ENCODE measurements at regions of chr16 and their contacts with region 1.

Region 1: GRCh38 chr16:2486645-2487516 is 12.0 kb downstream of the TBC1D24 start:
- DNase-seq: peak; percentile 61 to 93 (median 79)
- ATAC-seq: peak; percentile 97
- H3K4me3 ChIP-seq: peak overlapping the region in 1 of 2 experiments; percentile 5
- H3K4me3 Mint-ChIP-seq: peak overlapping the region; percentile 66
- H3K27ac ChIP-seq: peak overlapping the region in 1 of 2 experiments; percentile 40
- H3K27ac Mint-ChIP-seq: peak overlapping the region; percentile 90
- H3K4me1 ChIP-seq: peaks cover 18% of the 10 kb centered on the region
- H3K4me1 Mint-ChIP-seq: peaks cover 12% of the 10 kb centered on the region
- H3K27me3 ChIP-seq: no peaks in the 10 kb centered on the region
- H3K27me3 Mint-ChIP-seq: no peaks in the 10 kb centered on the region
- CTCF ChIP-seq: peak; percentile 77

Region 2: DNA sequence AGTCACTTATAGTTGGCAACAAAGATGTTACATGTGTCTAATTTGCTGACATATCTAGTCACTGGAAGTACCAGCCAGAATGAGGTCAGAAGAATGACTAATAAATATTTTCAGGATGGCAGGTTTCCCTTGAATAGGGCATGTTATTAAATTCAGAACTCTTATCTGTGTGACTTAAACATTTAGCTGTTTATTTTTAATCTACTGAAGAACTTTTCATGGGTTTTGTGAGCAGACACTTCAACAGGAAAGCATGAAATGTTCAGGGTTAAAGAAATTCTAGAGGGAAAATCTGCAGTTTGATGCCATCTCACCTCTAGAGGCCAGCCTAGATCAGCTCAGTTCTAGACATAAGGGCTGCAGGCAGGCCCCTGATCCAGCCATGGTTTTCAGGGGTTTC is 795.6 kb before region 1 on chr16:
- CTCF ChIA-PET with region 1: no interaction called
- POLR2A ChIA-PET with region 1: no interaction called
- intact Hi-C with region 1: no loop called
- DNase-seq: no peak
- ATAC-seq: no peak
- H3K4me3 ChIP-seq: no peak overlapping the region
- H3K4me3 Mint-ChIP-seq: no peak overlapping the region
- H3K27ac ChIP-seq: no peak overlapping the region
- H3K27ac Mint-ChIP-seq: no peak overlapping the region
- H3K4me1 ChIP-seq: no peaks in the 10 kb centered on the region
- H3K4me1 Mint-ChIP-seq: peaks cover 1% of the 10 kb centered on the region
- H3K27me3 ChIP-seq: no peaks in the 10 kb centered on the region
- H3K27me3 Mint-ChIP-seq: no peaks in the 10 kb centered on the region
- CTCF ChIP-seq: no peak

Region 3: GRCh38 chr16:2194852-2195321 is 292.0 kb before region 1 on chr16:
- CTCF ChIA-PET with region 1: interaction called, 13 read pairs
- POLR2A ChIA-PET with region 1: interaction called, 3 read pairs
- intact Hi-C with region 1: loop called in 1 of 2 experiments (anchors 1 kb)
- DNase-seq: peak in 8 of 9 experiments; percentile 23 to 79 (median 59)
- ATAC-seq: peak; percentile 70
- H3K4me3 ChIP-seq: no peak overlapping the region
- H3K4me3 Mint-ChIP-seq: peak overlapping the region; percentile 63
- H3K27ac ChIP-seq: no peak overlapping the region
- H3K27ac Mint-ChIP-seq: no peak overlapping the region
- H3K4me1 ChIP-seq: peaks cover 11% of the 10 kb centered on the region
- H3K4me1 Mint-ChIP-seq: peaks cover 5% of the 10 kb centered on the region
- H3K27me3 ChIP-seq: peaks cover 16 to 21% of the 10 kb centered on the region in 2 experiments
- H3K27me3 Mint-ChIP-seq: peaks cover 23% of the 10 kb centered on the region
- CTCF ChIP-seq: peak; percentile 25

Region 4: DNA sequence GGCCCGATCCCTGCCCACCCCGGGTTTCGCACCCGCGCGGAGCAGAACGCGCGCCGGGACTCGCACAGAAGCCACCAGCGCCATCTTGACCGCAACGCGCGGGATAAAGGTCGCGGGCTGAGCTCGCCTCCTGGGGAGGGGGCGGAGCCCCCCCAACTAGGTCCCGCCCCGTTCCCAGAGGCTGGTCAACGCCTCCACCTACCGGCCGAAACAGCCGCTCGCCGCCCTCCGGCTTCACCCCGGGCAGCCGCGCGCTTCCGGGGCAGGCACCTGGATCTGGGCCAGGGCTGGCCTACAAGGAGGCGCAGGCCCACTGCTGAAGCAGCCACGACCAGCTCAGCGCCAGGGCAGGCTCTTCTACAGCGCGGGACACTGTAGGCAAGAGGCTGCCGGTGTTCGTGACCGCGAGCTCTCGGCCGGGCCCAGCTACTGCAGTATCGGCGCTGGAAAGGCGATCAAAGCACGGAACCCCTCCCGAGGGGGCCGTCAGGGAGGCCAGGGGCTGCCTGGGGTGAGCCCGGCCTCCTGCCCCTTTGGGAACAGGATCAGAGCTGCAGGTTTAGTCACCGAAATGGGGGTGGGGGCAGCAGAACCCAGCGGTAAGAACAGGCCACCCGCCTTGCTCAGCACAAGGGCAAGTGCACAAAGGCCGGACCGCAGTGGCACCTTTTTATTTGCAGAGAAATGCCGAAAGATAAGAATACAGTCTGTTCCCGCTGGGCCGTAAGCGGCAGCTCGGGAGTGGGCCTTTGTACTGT is 235.2 kb before region 1 on chr16 and contains the start of gene ECI1:
- CTCF ChIA-PET with region 1: no interaction called
- POLR2A ChIA-PET with region 1: no interaction called
- intact Hi-C with region 1: loop called in 1 of 2 experiments (anchors 2 kb)
- DNase-seq: peak; percentile 50 to 89 (median 80)
- ATAC-seq: peak; percentile 70
- H3K4me3 ChIP-seq: peak within 1 kb of the TSS; percentile 57 to 64
- H3K4me3 Mint-ChIP-seq: peak within 1 kb of the TSS; percentile 85
- H3K27ac ChIP-seq: peak within 1 kb of the TSS; percentile 64 to 81
- H3K27ac Mint-ChIP-seq: peak within 1 kb of the TSS; percentile 90
- H3K4me1 ChIP-seq: peaks cover 8% of the 10 kb centered on the region
- H3K4me1 Mint-ChIP-seq: peaks cover 10% of the 10 kb centered on the region
- H3K27me3 ChIP-seq: no peaks in the 10 kb centered on the region
- H3K27me3 Mint-ChIP-seq: no peaks in the 10 kb centered on the region
- CTCF ChIP-seq: no peak
- total RNA-seq, gene ECI1: 10.6 to 11.0 TPM

Region 5: DNA sequence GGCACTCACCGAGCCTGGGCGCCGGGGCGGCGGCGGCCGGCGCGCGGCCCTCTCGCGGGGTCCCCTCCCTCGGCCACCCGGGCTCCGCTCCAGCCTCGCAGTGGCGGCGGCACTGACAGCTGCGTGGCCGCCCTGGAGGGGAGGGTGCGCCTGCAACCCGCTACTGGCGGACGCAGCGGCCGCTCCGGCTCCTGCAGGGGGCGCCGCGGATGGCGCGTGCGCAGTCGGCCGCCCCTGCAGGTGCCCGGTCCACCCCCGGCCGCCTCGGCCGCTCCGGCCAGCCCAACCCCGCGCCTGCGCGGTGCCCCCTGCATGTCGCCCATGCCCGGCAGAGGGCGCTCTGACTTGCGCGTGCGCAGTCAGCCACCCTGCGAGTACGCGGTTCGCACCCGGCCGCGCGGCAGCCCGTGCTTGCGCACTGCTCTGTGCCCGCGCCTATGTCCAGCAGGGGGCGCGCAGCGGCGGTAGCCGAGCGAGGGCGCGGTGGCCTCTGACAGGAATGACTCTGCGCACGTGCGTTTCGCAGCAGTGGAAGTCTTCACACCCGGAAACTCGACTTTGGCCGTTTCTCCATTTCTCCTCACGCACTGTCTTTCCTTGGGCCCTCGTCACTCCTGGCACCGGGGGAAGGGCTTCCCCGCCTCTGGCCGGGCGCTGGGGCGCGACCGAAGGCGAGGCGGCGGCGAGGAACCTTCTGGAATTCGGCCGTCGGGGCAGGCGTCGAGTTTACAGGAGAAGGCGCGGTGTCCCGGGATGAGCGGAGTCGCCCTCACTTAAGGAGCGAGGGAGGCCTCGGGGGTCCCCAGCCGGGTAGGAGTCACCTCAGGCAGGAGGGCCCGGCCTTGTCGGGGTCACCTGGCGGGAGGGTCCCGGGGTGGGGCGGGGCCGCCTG is 146.1 kb before region 1 on chr16 and contains the start of gene ABCA3:
- CTCF ChIA-PET with region 1: interaction called, 5 read pairs
- POLR2A ChIA-PET with region 1: no interaction called
- intact Hi-C with region 1: loop called (anchors 1 kb)
- DNase-seq: peak; percentile 87 to 98 (median 93)
- ATAC-seq: peak; percentile 89
- H3K4me3 ChIP-seq: peak within 1 kb of the TSS; percentile 59 to 62
- H3K4me3 Mint-ChIP-seq: peak within 1 kb of the TSS; percentile 85
- H3K27ac ChIP-seq: no peak within 1 kb of the TSS
- H3K27ac Mint-ChIP-seq: peak within 1 kb of the TSS; percentile 71
- H3K4me1 ChIP-seq: peaks cover 9% of the 10 kb centered on the region
- H3K4me1 Mint-ChIP-seq: peaks cover 13% of the 10 kb centered on the region
- H3K27me3 ChIP-seq: peaks cover 0 to 3% of the 10 kb centered on the region in 2 experiments
- H3K27me3 Mint-ChIP-seq: peaks cover 5% of the 10 kb centered on the region
- CTCF ChIP-seq: peak; percentile 100
- total RNA-seq, gene ABCA3: 3.7 to 4.0 TPM

Region 6: DNA sequence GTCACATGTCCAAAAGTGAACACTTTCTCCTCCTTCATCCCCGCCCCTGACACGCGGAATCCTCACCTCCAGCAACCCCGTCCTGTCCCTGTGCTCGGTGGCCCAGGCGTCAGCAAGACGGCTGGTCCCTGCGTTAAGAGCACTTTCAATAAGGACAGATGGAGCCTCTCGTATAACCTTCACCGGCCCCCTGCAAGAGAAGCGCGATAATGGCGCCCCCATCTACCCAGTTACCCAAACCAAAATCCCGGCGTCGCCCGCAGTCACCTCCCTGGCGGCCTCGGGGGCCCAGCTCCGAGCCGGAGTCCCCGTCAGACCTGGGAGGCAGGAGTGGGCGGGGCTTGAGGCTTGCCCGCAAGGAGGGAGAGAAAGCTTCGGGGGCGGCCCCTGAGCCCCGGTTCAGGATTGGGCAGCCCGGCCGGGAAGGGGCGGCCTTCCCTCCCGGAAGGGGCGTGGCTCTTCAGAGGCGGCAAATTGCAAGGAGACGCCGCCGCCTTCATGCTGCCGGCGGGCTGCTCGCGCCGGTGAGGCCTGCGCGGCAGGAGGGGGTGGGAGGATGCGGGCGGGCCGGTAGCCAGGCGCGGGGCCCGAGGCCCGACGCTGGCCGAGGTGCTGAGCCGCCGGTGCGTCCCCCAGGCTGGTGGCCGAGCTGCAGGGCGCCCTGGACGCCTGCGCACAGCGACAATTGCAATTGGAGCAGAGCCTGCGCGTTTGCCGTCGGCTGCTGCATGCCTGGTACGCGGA is 27.1 kb before region 1 on chr16 and contains the start of gene TEDC2:
- CTCF ChIA-PET with region 1: interaction called, 4 read pairs
- POLR2A ChIA-PET with region 1: no interaction called
- intact Hi-C with region 1: loop called (anchors 1 kb)
- DNase-seq: peak; percentile 92 to 98 (median 98)
- ATAC-seq: peak; percentile 100
- H3K4me3 ChIP-seq: peak within 1 kb of the TSS; percentile 54 to 62
- H3K4me3 Mint-ChIP-seq: peak within 1 kb of the TSS; percentile 82
- H3K27ac ChIP-seq: peak within 1 kb of the TSS in 1 of 2 experiments; percentile 8
- H3K27ac Mint-ChIP-seq: peak within 1 kb of the TSS; percentile 64
- H3K4me1 ChIP-seq: peaks cover 9% of the 10 kb centered on the region
- H3K4me1 Mint-ChIP-seq: peaks cover 6% of the 10 kb centered on the region
- H3K27me3 ChIP-seq: no peaks in the 10 kb centered on the region
- H3K27me3 Mint-ChIP-seq: no peaks in the 10 kb centered on the region
- CTCF ChIP-seq: no peak
- total RNA-seq, gene TEDC2: 0.30 to 0.69 TPM

Region 7: GRCh38 chr16:2474877-2475412 is 11.9 kb before region 1 on chr16 and contains the start of gene TBC1D24:
- CTCF ChIA-PET with region 1: interaction called, 5 read pairs
- POLR2A ChIA-PET with region 1: no interaction called
- intact Hi-C with region 1: loop called (anchors 1 kb)
- DNase-seq: peak; percentile 48 to 89 (median 77)
- ATAC-seq: peak; percentile 61
- H3K4me3 ChIP-seq: peak within 1 kb of the TSS; percentile 62 to 70
- H3K4me3 Mint-ChIP-seq: peak within 1 kb of the TSS; percentile 77
- H3K27ac ChIP-seq: peak within 1 kb of the TSS in 1 of 2 experiments; percentile 36
- H3K27ac Mint-ChIP-seq: no peak within 1 kb of the TSS
- H3K4me1 ChIP-seq: peaks cover 29% of the 10 kb centered on the region
- H3K4me1 Mint-ChIP-seq: peaks cover 24% of the 10 kb centered on the region
- H3K27me3 ChIP-seq: peaks cover 11 to 20% of the 10 kb centered on the region in 2 experiments
- H3K27me3 Mint-ChIP-seq: peaks cover 15% of the 10 kb centered on the region
- CTCF ChIP-seq: no peak
- total RNA-seq, gene TBC1D24: 2.8 to 3.8 TPM

Region 8: GRCh38 chr16:2500918-2501750 is 14.3 kb after region 1 on chr16:
- CTCF ChIA-PET with region 1: interaction called, 13 read pairs
- POLR2A ChIA-PET with region 1: no interaction called
- intact Hi-C with region 1: no loop called
- DNase-seq: peak; percentile 67 to 89 (median 80)
- ATAC-seq: peak; percentile 100
- H3K4me3 ChIP-seq: no peak overlapping the region
- H3K4me3 Mint-ChIP-seq: no peak overlapping the region
- H3K27ac ChIP-seq: no peak overlapping the region
- H3K27ac Mint-ChIP-seq: no peak overlapping the region
- H3K4me1 ChIP-seq: peaks cover 6% of the 10 kb centered on the region
- H3K4me1 Mint-ChIP-seq: peaks cover 2% of the 10 kb centered on the region
- H3K27me3 ChIP-seq: no peaks in the 10 kb centered on the region
- H3K27me3 Mint-ChIP-seq: no peaks in the 10 kb centered on the region
- CTCF ChIP-seq: peak; percentile 87

Region 9: DNA sequence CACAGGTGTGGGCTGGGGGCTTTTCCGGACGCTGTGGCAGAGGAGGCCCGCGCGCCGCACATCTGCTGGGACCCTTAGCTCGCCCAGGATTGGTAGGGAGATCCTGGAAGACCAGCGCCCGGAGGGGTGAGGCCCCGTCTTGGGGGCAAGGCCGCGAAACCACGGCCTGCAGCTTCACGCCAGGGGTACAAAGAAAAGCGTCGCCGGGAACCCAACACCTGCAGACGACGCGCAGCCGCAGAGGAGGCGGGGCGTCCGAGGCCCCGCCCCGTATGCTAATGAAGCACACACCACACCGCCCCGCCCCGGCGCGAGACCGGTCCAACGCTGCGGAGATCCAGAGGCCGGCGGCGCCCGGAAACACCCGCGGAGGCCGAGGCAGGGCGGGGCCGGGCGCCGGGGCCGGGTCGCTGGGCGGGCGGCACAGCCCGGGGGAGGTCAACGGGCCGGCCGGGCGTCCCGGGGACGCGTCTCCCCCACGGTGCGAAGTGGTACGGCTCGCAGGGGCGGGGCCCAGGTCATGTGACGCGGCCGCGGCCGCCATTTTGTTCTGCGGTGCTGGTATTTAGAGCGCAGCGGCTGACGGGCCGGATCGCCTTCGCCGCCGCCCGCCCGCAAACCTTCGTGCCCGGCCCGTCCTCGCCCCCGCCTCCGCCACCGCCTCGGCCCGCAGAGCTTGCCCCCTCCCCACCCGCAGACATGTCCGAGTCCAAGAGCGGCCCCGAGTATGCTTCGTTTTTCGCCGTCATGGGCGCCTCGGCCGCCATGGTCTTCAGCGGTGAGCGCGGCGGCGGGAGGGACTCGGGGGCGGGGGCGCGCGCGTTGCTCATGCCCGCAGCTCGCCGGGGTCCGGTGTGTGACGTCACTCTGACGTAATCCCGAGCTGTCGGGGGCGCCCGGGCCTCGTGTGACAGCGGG is 26.8 kb after region 1 on chr16 and contains the start of gene ATP6V0C:
- CTCF ChIA-PET with region 1: no interaction called
- POLR2A ChIA-PET with region 1: no interaction called
- intact Hi-C with region 1: no loop called
- DNase-seq: peak; percentile 84 to 97 (median 92)
- ATAC-seq: peak; percentile 89
- H3K4me3 ChIP-seq: peak within 1 kb of the TSS; percentile 67 to 69
- H3K4me3 Mint-ChIP-seq: peak within 1 kb of the TSS; percentile 94
- H3K27ac ChIP-seq: peak within 1 kb of the TSS; percentile 91 to 94
- H3K27ac Mint-ChIP-seq: peak within 1 kb of the TSS; percentile 97
- H3K4me1 ChIP-seq: peaks cover 47% of the 10 kb centered on the region
- H3K4me1 Mint-ChIP-seq: peaks cover 49% of the 10 kb centered on the region
- H3K27me3 ChIP-seq: no peaks in the 10 kb centered on the region
- H3K27me3 Mint-ChIP-seq: no peaks in the 10 kb centered on the region
- CTCF ChIP-seq: no peak
- total RNA-seq, gene ATP6V0C: 260 TPM

Region 10: DNA sequence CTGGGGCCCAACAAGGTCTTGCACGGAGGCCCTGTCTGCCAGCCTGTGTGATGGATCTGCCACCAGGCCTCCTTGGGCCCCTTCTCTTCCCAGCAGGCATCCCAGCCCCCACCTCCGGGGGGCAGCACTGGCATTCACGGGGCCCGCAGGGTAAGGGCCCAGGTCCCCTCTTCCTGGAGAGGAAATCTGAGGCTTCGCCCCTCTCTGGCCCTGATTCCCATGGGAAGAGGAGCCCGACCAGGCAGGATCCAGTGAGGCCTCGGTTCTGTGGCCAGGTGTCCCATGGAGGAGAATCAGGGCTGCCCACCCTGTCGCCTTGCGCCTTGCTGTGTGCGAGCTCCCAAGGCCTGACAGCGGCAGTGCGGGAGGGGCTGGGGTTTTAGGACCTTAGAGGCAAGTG is 99.4 kb after region 1 on chr16:
- CTCF ChIA-PET with region 1: no interaction called
- POLR2A ChIA-PET with region 1: no interaction called
- intact Hi-C with region 1: no loop called
- DNase-seq: peak in 1 of 9 experiments; percentile 20
- ATAC-seq: no peak
- H3K4me3 ChIP-seq: no peak overlapping the region
- H3K4me3 Mint-ChIP-seq: no peak overlapping the region
- H3K27ac ChIP-seq: no peak overlapping the region
- H3K27ac Mint-ChIP-seq: no peak overlapping the region
- H3K4me1 ChIP-seq: no peaks in the 10 kb centered on the region
- H3K4me1 Mint-ChIP-seq: peaks cover 3% of the 10 kb centered on the region
- H3K27me3 ChIP-seq: no peaks in the 10 kb centered on the region
- H3K27me3 Mint-ChIP-seq: no peaks in the 10 kb centered on the region
- CTCF ChIP-seq: no peak

Measured in CD8-positive, alpha-beta T cell (primary cell).